ENCODE measurements at regions of chr9 and their contacts with region 1.

Region 1: DNA sequence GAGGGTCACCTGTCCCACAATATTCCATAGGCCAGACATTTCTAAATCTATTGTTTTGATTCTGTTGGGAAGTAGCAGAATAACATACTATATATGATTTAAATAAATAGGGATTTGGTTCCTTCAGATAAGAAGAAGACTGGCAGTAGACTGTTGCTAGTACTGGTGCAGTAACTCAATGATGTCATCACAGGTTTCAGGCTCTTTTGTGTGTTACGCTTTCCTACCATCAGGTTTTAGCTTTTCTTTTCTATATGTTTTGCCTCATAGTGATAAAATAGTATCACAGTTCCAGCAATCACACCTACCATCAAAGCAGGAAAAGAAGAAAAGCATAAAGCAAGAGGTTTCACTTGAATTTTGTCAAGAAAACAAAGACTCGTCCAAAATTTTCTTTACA is 52.6 kb upstream of the OR13F1 start:
- DNase-seq: no peak
- ATAC-seq: no peak
- H3K4me3 ChIP-seq: no peak overlapping the region
- H3K27ac ChIP-seq: no peak overlapping the region
- H3K4me1 ChIP-seq: no peaks in the 10 kb centered on the region
- H3K27me3 ChIP-seq: no peaks in the 10 kb centered on the region
- CTCF ChIP-seq: no peak
- POLR2A ChIP-seq: no peak
- RAD21 ChIP-seq: no peak

Region 2: DNA sequence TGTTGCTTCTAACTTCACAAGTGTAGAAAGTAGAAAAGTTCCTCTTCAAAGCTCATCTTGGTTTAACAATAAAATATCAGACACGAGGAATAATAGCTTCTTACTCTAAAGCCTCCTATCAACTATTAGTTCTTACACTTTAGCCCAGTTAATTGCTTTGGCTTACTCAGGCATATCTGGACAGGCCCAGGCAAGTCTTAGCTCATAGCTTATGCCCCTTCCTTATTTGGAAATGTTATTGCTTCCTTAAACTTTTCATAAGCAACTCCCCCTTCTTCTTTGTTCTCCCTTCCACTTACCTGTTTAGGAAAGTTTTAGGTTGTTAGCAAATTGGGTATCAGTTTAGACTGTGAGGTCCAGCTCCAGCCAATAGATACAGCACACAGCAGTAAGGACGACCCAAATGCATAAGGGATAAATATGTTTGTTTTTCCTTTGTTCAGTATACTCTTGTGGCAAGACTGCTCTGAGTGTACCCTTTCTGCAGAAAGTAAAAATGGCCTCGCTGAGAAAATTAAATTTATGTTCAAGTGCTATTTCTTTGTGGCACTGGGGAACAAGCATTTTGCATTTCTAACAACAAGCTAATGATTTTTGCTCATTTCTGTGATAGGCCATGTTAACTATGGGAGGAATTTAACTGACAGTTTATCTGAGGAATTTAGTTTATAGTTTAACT is 195.3 kb before region 1 on chr9:
- CTCF ChIA-PET with region 1: no interaction called
- POLR2A ChIA-PET with region 1: no interaction called
- RAD21 ChIA-PET with region 1: no interaction called
- intact Hi-C with region 1: no loop called
- DNase-seq: no peak
- ATAC-seq: no peak
- H3K4me3 ChIP-seq: no peak overlapping the region
- H3K27ac ChIP-seq: no peak overlapping the region
- H3K4me1 ChIP-seq: no peaks in the 10 kb centered on the region; a peak in 1 of 4 replicates
- H3K27me3 ChIP-seq: no peaks in the 10 kb centered on the region
- CTCF ChIP-seq: no peak
- POLR2A ChIP-seq: no peak
- RAD21 ChIP-seq: no peak

Region 3: GRCh38 chr9:104468261-104468660 is 16.8 kb after region 1 on chr9:
- CTCF ChIA-PET with region 1: no interaction called
- POLR2A ChIA-PET with region 1: no interaction called
- RAD21 ChIA-PET with region 1: no interaction called
- intact Hi-C with region 1: loop called (anchors 2 kb)
- DNase-seq: no peak
- ATAC-seq: no peak
- H3K4me3 ChIP-seq: no peak overlapping the region
- H3K27ac ChIP-seq: no peak overlapping the region
- H3K4me1 ChIP-seq: no peaks in the 10 kb centered on the region
- H3K27me3 ChIP-seq: no peaks in the 10 kb centered on the region
- CTCF ChIP-seq: no peak
- POLR2A ChIP-seq: no peak
- RAD21 ChIP-seq: no peak